Caco-2 (cell line): ENCODE measurements at regions of chr18 and their contacts with region 1.

Region 1: DNA sequence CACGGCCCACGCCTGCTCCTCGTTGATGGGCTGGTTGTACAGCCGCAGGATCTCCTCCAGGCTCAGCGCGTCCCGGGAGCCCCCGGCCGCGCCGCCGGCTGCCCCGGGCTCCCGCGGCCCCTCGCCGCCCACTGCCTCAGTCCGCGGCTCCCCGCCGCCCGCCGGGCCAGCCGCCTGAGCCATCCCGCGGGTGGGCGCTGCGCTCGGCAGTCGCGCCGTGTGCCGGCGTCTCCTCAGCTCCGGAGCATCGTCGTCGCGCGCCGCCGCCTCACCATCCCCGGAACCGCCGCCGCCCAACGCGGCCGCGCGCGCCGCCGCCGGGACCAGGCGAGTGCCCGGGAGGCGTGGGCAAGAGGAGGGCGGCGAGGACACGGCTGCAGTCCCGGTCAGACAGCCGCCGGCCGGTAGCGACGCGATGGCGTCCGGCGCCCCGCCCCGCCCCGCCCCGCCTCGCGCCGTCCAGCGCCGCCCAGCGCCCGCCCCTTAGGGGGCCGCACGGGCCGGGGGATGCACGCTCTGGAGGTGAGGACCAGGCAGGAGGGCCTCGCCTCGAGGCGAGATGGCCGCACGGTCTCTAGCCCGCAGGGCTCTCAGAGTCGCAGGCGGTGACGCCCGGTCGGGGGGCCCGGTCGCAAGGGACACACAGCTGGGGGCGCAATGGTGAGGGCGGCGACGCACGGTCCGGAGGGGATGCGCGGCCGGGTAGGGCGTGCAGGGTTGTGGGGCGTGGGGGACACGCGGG is at the start of gene SPIRE1:
- DNase-seq: peak; percentile 52 to 69
- H3K4me3 ChIP-seq: peak within 1 kb of the TSS; percentile 74
- H3K4me3 Mint-ChIP-seq: peak within 1 kb of the TSS; percentile 85
- H3K27ac Mint-ChIP-seq: no peak within 1 kb of the TSS
- H3K4me1 ChIP-seq: peaks cover 3% of the 10 kb centered on the region; the same call in 1 of the 2 replicates
- H3K4me1 Mint-ChIP-seq: peaks cover 11% of the 10 kb centered on the region
- H3K27me3 ChIP-seq: no peaks in the 10 kb centered on the region
- H3K27me3 Mint-ChIP-seq: no peaks in the 10 kb centered on the region
- CTCF ChIP-seq: no peak
- total RNA-seq, gene SPIRE1: 9.2 and 9.5 TPM in 2 replicates

Region 2: GRCh38 chr18:12391618-12392165 is 266.2 kb before region 1 on chr18:
- CTCF ChIA-PET with region 1: interaction called, 7 read pairs
- POLR2A ChIA-PET with region 1: interaction called, 4 read pairs
- intact Hi-C with region 1: loop called (anchors 1 kb)
- DNase-seq: peak; percentile 54 to 66
- H3K4me3 ChIP-seq: no peak overlapping the region
- H3K4me3 Mint-ChIP-seq: no peak overlapping the region
- H3K27ac Mint-ChIP-seq: no peak overlapping the region
- H3K4me1 ChIP-seq: peaks cover 10% of the 10 kb centered on the region; the same call in 1 of the 2 replicates
- H3K4me1 Mint-ChIP-seq: peaks cover 12% of the 10 kb centered on the region
- H3K27me3 ChIP-seq: no peaks in the 10 kb centered on the region
- H3K27me3 Mint-ChIP-seq: no peaks in the 10 kb centered on the region
- CTCF ChIP-seq: peak; percentile 88 to 96

Region 3: GRCh38 chr18:12408247-12408869 is 249.5 kb before region 1 on chr18:
- CTCF ChIA-PET with region 1: no interaction called
- POLR2A ChIA-PET with region 1: no interaction called
- intact Hi-C with region 1: loop called (anchors 5 kb)
- DNase-seq: no peak
- H3K4me3 ChIP-seq: peak overlapping the region; percentile 55
- H3K4me3 Mint-ChIP-seq: peak overlapping the region; percentile 88
- H3K27ac Mint-ChIP-seq: no peak overlapping the region
- H3K4me1 ChIP-seq: peaks cover 11% of the 10 kb centered on the region; the same call in 1 of the 2 replicates
- H3K4me1 Mint-ChIP-seq: peaks cover 9% of the 10 kb centered on the region
- H3K27me3 ChIP-seq: no peaks in the 10 kb centered on the region
- H3K27me3 Mint-ChIP-seq: peaks cover 10% of the 10 kb centered on the region
- CTCF ChIP-seq: no peak

Region 4: GRCh38 chr18:12470382-12471075 is 187.3 kb before region 1 on chr18:
- CTCF ChIA-PET with region 1: no interaction called
- POLR2A ChIA-PET with region 1: no interaction called
- intact Hi-C with region 1: loop called (anchors 10 kb)
- DNase-seq: no peak
- H3K4me3 ChIP-seq: no peak overlapping the region
- H3K4me3 Mint-ChIP-seq: no peak overlapping the region
- H3K27ac Mint-ChIP-seq: no peak overlapping the region
- H3K4me1 ChIP-seq: no peaks in the 10 kb centered on the region
- H3K4me1 Mint-ChIP-seq: no peaks in the 10 kb centered on the region
- H3K27me3 ChIP-seq: no peaks in the 10 kb centered on the region
- H3K27me3 Mint-ChIP-seq: no peaks in the 10 kb centered on the region
- CTCF ChIP-seq: no peak

Region 5: DNA sequence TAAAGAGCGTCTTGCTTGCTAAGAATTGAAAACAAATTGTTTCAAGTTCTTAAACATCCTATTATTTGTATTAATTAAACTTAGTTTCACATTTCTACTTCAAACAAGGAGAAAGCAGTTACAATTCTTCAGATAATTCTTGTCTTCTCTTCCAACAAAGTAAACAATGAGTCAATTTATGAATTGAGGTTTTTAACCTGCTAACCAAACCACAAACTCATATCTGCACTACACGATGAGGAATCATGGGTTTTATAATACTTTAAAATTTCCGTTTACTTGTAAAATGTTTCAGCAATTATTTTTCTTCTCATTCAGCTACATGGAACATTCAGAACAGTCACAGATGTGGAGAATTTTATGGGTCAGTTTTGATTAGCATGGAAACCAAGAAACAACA is 114.2 kb before region 1 on chr18:
- CTCF ChIA-PET with region 1: no interaction called
- POLR2A ChIA-PET with region 1: no interaction called
- intact Hi-C with region 1: loop called (anchors 5 kb)
- DNase-seq: no peak
- H3K4me3 ChIP-seq: no peak overlapping the region
- H3K4me3 Mint-ChIP-seq: no peak overlapping the region
- H3K27ac Mint-ChIP-seq: no peak overlapping the region
- H3K4me1 ChIP-seq: no peaks in the 10 kb centered on the region
- H3K4me1 Mint-ChIP-seq: no peaks in the 10 kb centered on the region
- H3K27me3 ChIP-seq: no peaks in the 10 kb centered on the region
- H3K27me3 Mint-ChIP-seq: no peaks in the 10 kb centered on the region
- CTCF ChIP-seq: no peak